Activated CD4-positive, alpha-beta memory T cell treated with anti-CD3 and anti-CD28 coated beads for 36 hours (primary cell): ENCODE measurements at regions of chr14 and their contacts with region 1.

Region 1: DNA sequence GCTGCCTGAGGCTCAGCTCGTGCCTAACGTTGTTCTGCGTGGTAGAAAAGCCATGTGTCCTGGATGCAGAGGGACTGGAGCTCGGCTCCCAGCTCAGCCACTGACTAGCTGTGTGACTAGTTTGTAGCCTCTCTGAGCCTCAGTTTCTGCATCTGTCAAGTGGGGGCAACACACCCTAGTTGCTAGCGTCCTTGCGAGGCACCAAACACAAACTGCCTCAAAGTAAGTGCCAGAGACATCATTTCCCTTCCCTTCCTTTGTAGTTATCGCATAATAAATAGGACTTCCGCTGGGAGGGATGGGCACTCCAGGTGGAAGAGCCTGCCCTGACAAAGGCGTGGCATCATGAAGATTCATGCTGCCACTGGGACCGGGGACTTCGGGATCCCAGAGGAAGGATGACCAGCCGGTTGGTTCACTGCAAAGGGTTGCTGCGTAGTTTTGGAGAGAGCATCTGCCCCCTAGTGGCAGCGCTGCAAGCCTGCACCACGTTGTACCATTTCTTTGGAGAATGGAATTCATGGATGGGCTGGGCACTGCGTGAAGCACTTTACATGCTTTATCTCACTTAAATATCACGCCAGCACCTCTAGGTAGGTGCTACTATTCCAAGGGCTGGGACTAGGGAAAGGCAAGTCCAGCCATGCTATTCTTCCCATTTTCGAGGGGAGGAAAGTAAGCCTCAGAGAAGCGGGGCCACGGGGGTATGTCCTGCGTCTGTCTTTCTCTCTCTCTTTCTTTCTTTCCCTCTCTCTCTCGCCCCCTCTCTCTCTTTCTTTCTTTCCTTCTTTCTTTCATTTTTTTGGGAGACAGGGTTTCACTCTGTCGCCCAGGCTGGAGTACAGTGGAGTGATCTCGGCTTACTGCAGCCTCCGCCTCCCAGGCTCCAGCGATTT is 4.6 kb downstream of the CCDC197 start:
- DNase-seq: peak; percentile 72
- H3K4me3 Mint-ChIP-seq: no peak overlapping the region
- H3K27ac Mint-ChIP-seq: peak overlapping the region; percentile 50
- H3K4me1 Mint-ChIP-seq: peaks cover 29% of the 10 kb centered on the region
- H3K27me3 Mint-ChIP-seq: no peaks in the 10 kb centered on the region

Region 2: GRCh38 chr14:93946104-93946503 is 55.6 kb before region 1 on chr14:
- CTCF ChIA-PET with region 1: interaction called, 309 read pairs
- POLR2A ChIA-PET with region 1: interaction called, 3 read pairs
- intact Hi-C with region 1: no loop called
- DNase-seq: no peak
- H3K4me3 Mint-ChIP-seq: no peak overlapping the region
- H3K27ac Mint-ChIP-seq: no peak overlapping the region
- H3K4me1 Mint-ChIP-seq: peaks cover 9% of the 10 kb centered on the region
- H3K27me3 Mint-ChIP-seq: no peaks in the 10 kb centered on the region

Region 3: GRCh38 chr14:93975791-93976476 is 25.8 kb before region 1 on chr14:
- CTCF ChIA-PET with region 1: interaction called, 47 read pairs
- POLR2A ChIA-PET with region 1: interaction called, 12 read pairs
- intact Hi-C with region 1: loop called (anchors 1 kb)
- DNase-seq: peak; percentile 70
- H3K4me3 Mint-ChIP-seq: peak overlapping the region; percentile 75
- H3K27ac Mint-ChIP-seq: peak overlapping the region; percentile 98
- H3K4me1 Mint-ChIP-seq: peaks cover 97% of the 10 kb centered on the region
- H3K27me3 Mint-ChIP-seq: no peaks in the 10 kb centered on the region

Region 4: GRCh38 chr14:94021001-94021400 is 19.3 kb after region 1 on chr14:
- CTCF ChIA-PET with region 1: interaction called, 12 read pairs
- POLR2A ChIA-PET with region 1: no interaction called
- intact Hi-C with region 1: no loop called
- DNase-seq: peak; percentile 36
- H3K4me3 Mint-ChIP-seq: no peak overlapping the region
- H3K27ac Mint-ChIP-seq: peak overlapping the region; percentile 70
- H3K4me1 Mint-ChIP-seq: peaks cover 31% of the 10 kb centered on the region
- H3K27me3 Mint-ChIP-seq: no peaks in the 10 kb centered on the region